Esophagus squamous epithelium (tissue), 5 donors: ENCODE measurements at regions of chr9 and their contacts with region 1.

Region 1: DNA sequence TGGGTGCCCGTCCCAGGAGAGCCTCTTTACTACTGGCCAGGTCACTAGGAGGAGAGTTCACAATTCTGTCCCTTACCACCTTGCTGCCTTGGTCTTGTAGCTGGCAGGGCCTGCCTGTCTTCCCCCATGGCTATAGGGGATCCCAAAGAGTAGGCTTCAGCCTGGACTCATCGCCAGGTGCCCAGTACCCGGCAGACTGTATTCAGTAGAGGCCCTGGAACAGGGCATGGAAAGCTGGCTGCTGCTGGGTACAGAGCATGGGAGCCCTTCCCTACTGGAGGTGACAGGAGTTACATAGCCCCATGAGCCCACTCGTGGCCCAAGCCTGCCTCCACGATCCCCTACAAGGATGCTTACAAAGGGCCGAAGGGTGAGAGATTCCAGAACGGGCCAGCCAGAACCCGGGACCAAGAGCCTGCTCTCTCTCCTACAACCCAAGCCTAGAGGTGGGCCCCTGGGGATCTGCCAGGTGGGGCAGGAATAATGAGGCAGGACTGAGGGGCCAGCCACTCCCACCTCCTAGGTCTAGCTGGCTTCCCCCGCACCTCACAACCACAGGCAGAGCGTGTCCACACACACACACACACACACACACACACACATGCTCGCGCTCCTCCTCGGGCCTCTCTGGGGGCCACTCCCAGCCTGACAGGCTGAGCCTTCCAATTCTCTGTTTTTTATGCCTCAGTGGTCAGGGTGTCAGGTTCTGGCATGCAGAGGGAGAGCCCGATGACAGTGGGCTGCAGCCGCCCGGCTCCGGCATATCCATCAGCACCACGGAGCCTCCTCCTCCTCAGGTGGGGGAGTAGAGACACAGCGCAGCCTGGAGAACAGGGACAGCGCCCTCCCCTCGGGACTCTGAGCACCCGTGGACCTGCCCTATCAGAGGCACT is 186.0 kb downstream of the PAX5 start:
- DNase-seq: no peak
- H3K4me3 ChIP-seq: no peak overlapping the region
- H3K27ac ChIP-seq: no peak overlapping the region
- H3K4me1 ChIP-seq: no peaks in the 10 kb centered on the region
- H3K27me3 ChIP-seq: peaks cover 0 to 32% (median 0%) of the 10 kb centered on the region in 4 donors
- CTCF ChIP-seq: no peak
- POLR2A ChIP-seq: no peak

Region 2: GRCh38 chr9:36903541-36904435 is 55.8 kb after region 1 on chr9:
- intact Hi-C with region 1: loop called (anchors 10 kb)
- DNase-seq: no peak
- H3K4me3 ChIP-seq: no peak overlapping the region
- H3K27ac ChIP-seq: no peak overlapping the region
- H3K4me1 ChIP-seq: no peaks in the 10 kb centered on the region
- H3K27me3 ChIP-seq: peaks cover 0 to 68% (median 0%) of the 10 kb centered on the region in 4 donors
- CTCF ChIP-seq: no peak
- POLR2A ChIP-seq: no peak